Calu3 (cell line): ENCODE measurements at regions of chr12 and their contacts with region 1.

Region 1: DNA sequence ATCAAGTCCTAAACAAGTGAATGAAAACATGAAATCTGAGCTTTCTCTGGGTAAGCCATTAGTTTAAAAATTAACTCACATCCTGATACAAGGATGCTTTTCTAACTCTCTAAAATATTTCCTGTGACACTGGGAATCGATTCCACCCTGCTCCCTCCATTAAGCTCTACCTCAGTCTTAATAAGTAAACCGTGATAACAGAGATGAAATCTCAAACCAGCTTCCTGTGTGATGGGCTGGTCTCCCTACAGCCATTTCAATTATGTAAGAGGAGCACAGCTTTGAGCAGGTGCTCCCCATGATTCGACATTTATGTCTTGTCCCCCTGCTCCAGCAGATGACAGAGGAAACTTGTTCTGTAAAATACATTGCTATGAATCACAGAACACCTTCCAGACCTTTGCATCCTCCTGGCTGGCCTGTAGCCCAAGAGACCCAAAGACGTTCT is 59.0 kb downstream of the GAS2L3 start:
- DNase-seq: peak; percentile 43
- H3K4me3 Mint-ChIP-seq: peak overlapping the region; percentile 62
- H3K27ac Mint-ChIP-seq: peak overlapping the region; percentile 70
- H3K4me1 Mint-ChIP-seq: peaks cover 41% of the 10 kb centered on the region
- H3K27me3 Mint-ChIP-seq: no peaks in the 10 kb centered on the region
- CTCF ChIP-seq: no peak

Region 2: GRCh38 chr12:100329800-100330199 is 302.7 kb before region 1 on chr12:
- CTCF ChIA-PET with region 1: no interaction called
- intact Hi-C with region 1: no loop called
- DNase-seq: no peak
- H3K4me3 Mint-ChIP-seq: no peak overlapping the region
- H3K27ac Mint-ChIP-seq: no peak overlapping the region
- H3K4me1 Mint-ChIP-seq: no peaks in the 10 kb centered on the region
- H3K27me3 Mint-ChIP-seq: no peaks in the 10 kb centered on the region
- CTCF ChIP-seq: no peak

Region 3: GRCh38 chr12:100593490-100593889 is 39.0 kb before region 1 on chr12:
- CTCF ChIA-PET with region 1: interaction called, 6 read pairs
- intact Hi-C with region 1: loop called (anchors 2 kb)
- DNase-seq: no peak
- H3K4me3 Mint-ChIP-seq: peak overlapping the region; percentile 45
- H3K27ac Mint-ChIP-seq: peak overlapping the region; percentile 87
- H3K4me1 Mint-ChIP-seq: peaks cover 41% of the 10 kb centered on the region
- H3K27me3 Mint-ChIP-seq: no peaks in the 10 kb centered on the region
- CTCF ChIP-seq: no peak

Region 4: GRCh38 chr12:100830003-100830795 is 197.7 kb after region 1 on chr12:
- CTCF ChIA-PET with region 1: no interaction called
- intact Hi-C with region 1: no loop called
- DNase-seq: no peak
- H3K4me3 Mint-ChIP-seq: no peak overlapping the region
- H3K27ac Mint-ChIP-seq: no peak overlapping the region
- H3K4me1 Mint-ChIP-seq: no peaks in the 10 kb centered on the region
- H3K27me3 Mint-ChIP-seq: no peaks in the 10 kb centered on the region
- CTCF ChIP-seq: no peak